ENCODE measurements at regions of chr11 and their contacts with region 1.

Region 1: DNA sequence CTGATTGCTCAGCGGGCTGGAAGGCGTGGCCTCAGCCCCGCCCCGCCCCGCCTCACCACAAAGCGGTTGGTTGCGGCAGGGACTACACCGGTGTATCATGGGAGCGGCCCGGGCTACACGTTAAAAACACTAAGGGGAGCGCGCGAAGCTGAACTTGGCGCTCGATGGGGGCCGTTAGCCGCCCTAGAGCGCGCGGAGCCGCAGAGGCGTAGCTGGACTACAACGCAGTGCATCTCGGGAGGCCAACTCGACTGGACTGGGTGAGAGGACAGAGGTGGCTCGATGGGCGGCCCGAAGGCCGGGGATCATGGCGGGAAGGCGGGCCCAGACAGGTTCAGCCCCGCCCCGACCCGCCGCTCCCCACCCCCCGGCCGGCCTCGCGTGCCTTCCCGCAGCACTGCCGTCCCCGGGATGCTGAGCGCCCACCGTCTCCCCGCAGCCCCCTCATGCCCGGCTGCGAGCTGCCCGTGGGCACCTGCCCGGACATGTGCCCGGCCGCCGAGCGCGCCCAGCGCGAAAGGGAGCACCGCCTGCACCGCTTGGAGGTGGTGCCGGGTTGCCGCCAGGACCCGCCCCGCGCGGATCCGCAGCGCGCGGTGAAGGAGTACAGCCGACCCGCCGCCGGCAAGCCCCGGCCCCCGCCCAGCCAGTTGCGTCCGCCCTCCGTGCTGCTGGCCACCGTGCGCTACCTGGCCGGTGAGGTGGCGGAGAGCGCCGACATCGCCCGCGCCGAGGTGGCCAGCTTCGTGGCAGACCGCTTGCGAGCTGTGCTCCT is at the start of gene SAC3D1:
- DNase-seq: peak; percentile 93
- ATAC-seq: peak; percentile 96
- H3K4me3 ChIP-seq: peak within 1 kb of the TSS; percentile 94
- H3K27ac ChIP-seq: peak within 1 kb of the TSS; percentile 89
- H3K4me1 ChIP-seq: no peaks in the 10 kb centered on the region
- H3K27me3 ChIP-seq: no peaks in the 10 kb centered on the region
- CTCF ChIP-seq: no peak
- POLR2A ChIP-seq: no peak
- RAD21 ChIP-seq: no peak
- total RNA-seq, gene SAC3D1: 2.8 and 2.9 TPM in 2 replicates

Region 2: GRCh38 chr11:65027213-65028067 is 13.6 kb before region 1 on chr11 and contains the start of gene SNX15:
- CTCF ChIA-PET with region 1: interaction called, 3 read pairs
- POLR2A ChIA-PET with region 1: interaction called, 3 read pairs
- dilution Hi-C with region 1: no loop called
- in situ Hi-C with region 1: no loop called
- intact Hi-C with region 1: loop called (anchors 1 kb)
- DNase-seq: peak; percentile 96
- ATAC-seq: peak; percentile 98
- H3K4me3 ChIP-seq: peak within 1 kb of the TSS; percentile 68
- H3K27ac ChIP-seq: peak within 1 kb of the TSS; percentile 87
- H3K4me1 ChIP-seq: peaks cover 2% of the 10 kb centered on the region; the same call in 1 of the 2 replicates
- H3K27me3 ChIP-seq: no peaks in the 10 kb centered on the region
- CTCF ChIP-seq: peak; percentile 63
- POLR2A ChIP-seq: no peak
- RAD21 ChIP-seq: peak; percentile 32
- total RNA-seq, gene SNX15: 8.1 and 9.0 TPM in 2 replicates

Region 3: GRCh38 chr11:65083834-65084597 is 43.0 kb after region 1 on chr11 and contains the starts of genes CDCA5 and ZFPL1:
- CTCF ChIA-PET with region 1: no interaction called
- POLR2A ChIA-PET with region 1: interaction called, 4 read pairs
- dilution Hi-C with region 1: no loop called
- in situ Hi-C with region 1: no loop called
- intact Hi-C with region 1: loop called (anchors 2 kb)
- DNase-seq: peak; percentile 94
- ATAC-seq: peak; percentile 93
- H3K4me3 ChIP-seq: peak within 1 kb of the TSS; percentile 89
- H3K27ac ChIP-seq: peak within 1 kb of the TSS; percentile 100
- H3K4me1 ChIP-seq: peaks cover 4% of the 10 kb centered on the region; the same call in 1 of the 2 replicates
- H3K27me3 ChIP-seq: no peaks in the 10 kb centered on the region
- CTCF ChIP-seq: 0 out of 2 replicates have a peak, but pooled peaks have one; percentile 1
- POLR2A ChIP-seq: peak; percentile 97
- RAD21 ChIP-seq: no peak; the same call in 1 of the 2 replicates
- total RNA-seq, gene CDCA5: 9.1 and 10.0 TPM in 2 replicates
- total RNA-seq, gene ZFPL1: 24.0 and 27.2 TPM in 2 replicates

Region 4: DNA sequence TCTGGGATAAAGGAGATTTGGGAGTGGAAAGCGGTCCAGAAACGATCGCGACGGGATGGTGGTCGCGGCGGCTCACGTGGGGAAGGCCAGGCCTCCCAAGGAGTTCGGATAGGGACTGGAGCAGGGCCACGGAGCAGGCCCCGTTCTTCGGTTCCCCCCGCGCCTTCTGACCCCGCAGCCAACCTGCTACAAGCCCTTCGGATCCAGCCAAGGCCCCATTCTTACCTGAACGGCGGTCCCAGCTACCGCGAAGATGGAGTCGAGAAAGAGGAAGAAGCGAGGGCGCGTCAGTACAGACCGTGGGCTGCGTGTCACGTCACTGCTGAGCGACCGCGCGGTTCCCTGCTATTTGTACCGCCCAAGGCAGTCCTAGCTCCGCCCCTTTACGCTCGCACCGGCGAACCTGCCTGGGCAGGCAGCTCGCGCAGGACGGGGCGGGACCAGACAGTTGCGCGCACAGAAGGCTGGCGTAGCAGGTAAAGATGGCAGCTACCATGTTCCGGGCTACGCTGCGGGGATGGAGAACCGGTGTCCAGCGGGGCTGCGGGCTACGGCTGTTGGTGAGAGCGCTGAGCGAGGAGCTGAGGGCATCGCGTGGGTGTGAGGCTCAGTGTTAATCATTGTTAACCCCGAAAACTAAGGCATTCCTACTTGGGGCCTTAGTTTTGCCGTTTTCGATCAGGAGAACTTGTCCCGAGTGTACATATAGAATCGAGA is 81.0 kb after region 1 on chr11 and contains the starts of genes FAU and MRPL49:
- CTCF ChIA-PET with region 1: no interaction called
- POLR2A ChIA-PET with region 1: no interaction called
- dilution Hi-C with region 1: no loop called
- in situ Hi-C with region 1: no loop called
- intact Hi-C with region 1: no loop called
- DNase-seq: peak; percentile 96
- ATAC-seq: peak; percentile 87
- H3K4me3 ChIP-seq: peak within 1 kb of the TSS; percentile 74
- H3K27ac ChIP-seq: peak within 1 kb of the TSS; percentile 82
- H3K4me1 ChIP-seq: no peaks in the 10 kb centered on the region; the same call in 1 of the 2 replicates
- H3K27me3 ChIP-seq: no peaks in the 10 kb centered on the region
- CTCF ChIP-seq: no peak
- POLR2A ChIP-seq: peak; percentile 88; the same call in 1 of the 2 replicates
- RAD21 ChIP-seq: no peak
- total RNA-seq, gene FAU: 189 and 285 TPM in 2 replicates
- total RNA-seq, gene MRPL49: 54.2 and 55.2 TPM in 2 replicates